ENCODE measurements at regions of chr11 and their contacts with region 1.

Region 1: GRCh38 chr11:1202776-1203504 is 19.9 kb upstream of the MUC5B start:
- DNase-seq: peak; percentile 20
- H3K4me3 ChIP-seq: no peak overlapping the region
- H3K27ac ChIP-seq: no peak overlapping the region
- H3K4me1 ChIP-seq: peaks cover 20% of the 10 kb centered on the region
- H3K27me3 ChIP-seq: peaks cover 14% of the 10 kb centered on the region
- CTCF ChIP-seq: peak; percentile 85 to 95

Region 2: DNA sequence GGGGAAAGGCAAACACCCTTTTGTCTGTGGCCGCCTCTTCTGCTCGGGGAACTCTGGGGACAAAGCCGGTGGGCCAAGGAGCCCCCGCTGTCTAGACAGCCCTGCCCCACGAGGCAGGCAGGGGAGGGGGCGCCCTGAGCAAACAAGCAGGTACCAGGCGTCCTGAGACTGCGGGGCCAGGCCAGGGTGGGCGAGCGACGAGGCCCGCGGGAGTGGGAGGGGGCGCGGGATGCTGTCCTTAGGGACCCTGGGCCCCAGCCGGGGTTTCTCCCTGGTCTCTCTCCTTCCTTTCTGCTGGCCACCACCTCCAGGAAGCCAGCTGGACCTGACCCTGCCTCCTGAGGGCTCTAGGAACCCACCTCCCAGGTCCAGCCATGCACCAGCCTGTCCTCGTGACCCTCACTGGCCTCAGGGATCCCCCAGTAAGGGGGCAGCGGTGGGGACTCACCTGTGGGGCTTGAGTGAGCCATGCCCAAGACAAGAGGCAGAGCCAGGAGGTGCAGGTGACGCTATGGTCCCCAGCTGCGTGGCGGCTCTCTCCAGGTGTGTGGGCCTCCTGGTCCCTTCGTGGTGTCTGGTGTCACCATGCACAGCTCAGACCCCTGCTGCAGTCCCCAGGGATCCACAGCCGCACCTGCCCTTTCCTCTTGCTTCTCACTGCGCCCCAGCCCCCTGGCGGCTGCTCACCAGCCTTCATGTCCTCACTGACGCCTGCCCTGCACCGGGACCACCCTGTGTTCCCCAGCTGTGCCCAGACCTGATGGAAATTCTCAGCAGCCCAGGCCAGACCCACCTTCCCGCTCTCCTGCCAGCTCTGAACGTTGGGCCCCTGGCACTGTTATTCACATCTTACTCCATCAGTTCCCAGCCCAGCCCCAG is 71.7 kb before region 1 on chr11:
- CTCF ChIA-PET with region 1: no interaction called
- dilution Hi-C with region 1: loop called (anchors 10 kb)
- in situ Hi-C with region 1: no loop called
- intact Hi-C with region 1: no loop called
- DNase-seq: no peak
- H3K4me3 ChIP-seq: no peak overlapping the region
- H3K27ac ChIP-seq: no peak overlapping the region
- H3K4me1 ChIP-seq: no peaks in the 10 kb centered on the region
- H3K27me3 ChIP-seq: peaks cover 7% of the 10 kb centered on the region
- CTCF ChIP-seq: no peak

Region 3: GRCh38 chr11:1369371-1370005 is 166.5 kb after region 1 on chr11:
- CTCF ChIA-PET with region 1: no interaction called
- dilution Hi-C with region 1: loop called (anchors 10 kb)
- in situ Hi-C with region 1: no loop called
- intact Hi-C with region 1: no loop called
- DNase-seq: no peak
- H3K4me3 ChIP-seq: no peak overlapping the region
- H3K27ac ChIP-seq: no peak overlapping the region
- H3K4me1 ChIP-seq: no peaks in the 10 kb centered on the region
- H3K27me3 ChIP-seq: no peaks in the 10 kb centered on the region
- CTCF ChIP-seq: no peak

Region 4: GRCh38 chr11:1458340-1459218 is 255.6 kb after region 1 on chr11:
- CTCF ChIA-PET with region 1: no interaction called
- dilution Hi-C with region 1: loop called (anchors 10 kb)
- in situ Hi-C with region 1: no loop called
- intact Hi-C with region 1: no loop called
- DNase-seq: no peak
- H3K4me3 ChIP-seq: no peak overlapping the region
- H3K27ac ChIP-seq: no peak overlapping the region
- H3K4me1 ChIP-seq: no peaks in the 10 kb centered on the region
- H3K27me3 ChIP-seq: no peaks in the 10 kb centered on the region
- CTCF ChIP-seq: peak in 1 of 2 donors; percentile 30

Region 5: DNA sequence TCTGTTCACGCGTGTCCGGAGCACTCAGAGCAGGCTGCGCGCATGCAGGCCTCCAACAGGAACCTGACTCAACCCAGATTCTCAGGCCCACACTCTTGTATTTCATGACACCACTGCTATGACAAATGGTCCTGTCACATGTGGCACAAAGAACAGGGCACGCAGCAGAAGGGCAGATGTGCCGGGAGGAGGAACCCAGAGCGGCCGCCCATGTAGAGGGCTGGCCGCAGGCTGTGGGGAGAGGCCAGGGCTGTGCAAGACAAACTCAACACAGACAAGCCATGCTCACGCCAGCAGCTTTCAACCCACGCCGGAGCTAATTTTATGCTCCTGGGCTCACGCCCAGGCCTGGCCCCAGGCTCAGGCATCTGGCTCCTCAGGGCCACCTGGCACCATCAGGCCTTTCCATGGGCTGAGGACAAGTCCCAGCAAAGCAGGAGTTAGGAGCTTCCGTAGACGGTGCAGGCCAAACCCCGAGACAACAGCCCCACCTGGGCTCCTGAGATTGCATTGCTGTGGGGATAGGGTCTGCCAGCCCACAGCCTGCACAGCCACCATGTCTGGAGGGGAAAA is 329.2 kb after region 1 on chr11:
- CTCF ChIA-PET with region 1: no interaction called
- dilution Hi-C with region 1: no loop called
- in situ Hi-C with region 1: no loop called
- intact Hi-C with region 1: loop called (anchors 5 kb)
- DNase-seq: peak; percentile 79
- H3K4me3 ChIP-seq: no peak overlapping the region
- H3K27ac ChIP-seq: peak overlapping the region; percentile 68
- H3K4me1 ChIP-seq: peaks cover 57% of the 10 kb centered on the region
- H3K27me3 ChIP-seq: no peaks in the 10 kb centered on the region
- CTCF ChIP-seq: peak in 1 of 2 donors; percentile 32